CD14-positive monocyte (primary cell): ENCODE measurements at regions of chr10 and their contacts with region 1.

Region 1: GRCh38 chr10:77641788-77642397 is 4.3 kb upstream of the KCNMA1 start:
- DNase-seq: peak; percentile 31 to 57 (median 56)
- H3K4me3 ChIP-seq: no peak overlapping the region
- H3K4me3 Mint-ChIP-seq: peak overlapping the region in 1 of 2 donors; percentile 64
- H3K27ac ChIP-seq: no peak overlapping the region
- H3K27ac Mint-ChIP-seq: no peak overlapping the region
- H3K4me1 ChIP-seq: peaks cover 9 to 14% of the 10 kb centered on the region in 2 donors
- H3K4me1 Mint-ChIP-seq: peaks cover 14% of the 10 kb centered on the region
- H3K27me3 ChIP-seq: peaks cover 32 to 36% of the 10 kb centered on the region in 2 donors
- H3K27me3 Mint-ChIP-seq: peaks cover 42 to 49% (median 43%) of the 10 kb centered on the region in 3 donors
- CTCF ChIP-seq: peak; percentile 90

Region 2: DNA sequence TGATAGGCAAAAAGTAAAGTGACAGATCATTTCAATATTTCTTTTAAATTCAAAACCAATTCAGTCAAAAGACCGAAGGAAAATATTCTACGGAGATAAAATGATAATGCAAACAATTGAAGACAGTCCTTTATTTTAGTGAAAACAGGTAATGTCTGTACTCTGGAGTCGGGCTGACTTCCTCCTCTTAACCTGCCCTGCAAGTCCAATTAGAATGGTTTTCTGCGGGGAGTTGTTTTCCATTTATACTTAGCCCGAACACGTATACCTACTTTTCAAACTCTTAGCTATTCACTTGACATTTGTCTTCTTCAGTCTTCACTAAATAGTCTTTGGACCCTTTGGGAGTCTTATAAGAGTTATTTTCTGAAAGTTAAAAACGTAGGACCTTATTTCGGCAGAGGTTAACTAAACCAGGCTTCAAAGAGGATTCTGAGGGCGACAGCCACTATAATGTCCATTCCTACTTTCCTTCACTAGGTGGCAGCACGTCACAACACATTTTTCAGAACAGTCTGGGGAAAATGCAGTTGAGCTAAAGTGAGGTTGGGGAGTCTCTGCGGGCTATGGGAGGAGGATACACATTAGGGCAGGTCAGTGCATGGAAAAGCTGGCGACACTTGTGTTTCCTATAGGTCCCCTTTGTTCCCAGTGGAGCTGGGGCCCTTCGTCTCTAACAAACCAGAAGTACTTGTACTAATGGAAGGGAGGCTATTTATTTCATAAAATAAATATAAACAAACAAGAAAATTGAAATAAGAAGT is 476.3 kb before region 1 on chr10:
- intact Hi-C with region 1: loop called in 1 of 2 experiments (anchors 5 kb)
- DNase-seq: peak; percentile 22 to 50 (median 35)
- H3K4me3 ChIP-seq: no peak overlapping the region
- H3K4me3 Mint-ChIP-seq: peak overlapping the region in 1 of 2 donors; percentile 40
- H3K27ac ChIP-seq: no peak overlapping the region
- H3K27ac Mint-ChIP-seq: no peak overlapping the region
- H3K4me1 ChIP-seq: no peaks in the 10 kb centered on the region
- H3K4me1 Mint-ChIP-seq: peaks cover 9% of the 10 kb centered on the region
- H3K27me3 ChIP-seq: peaks cover 9 to 16% of the 10 kb centered on the region in 2 donors
- H3K27me3 Mint-ChIP-seq: peaks cover 13 to 41% (median 19%) of the 10 kb centered on the region in 3 donors
- CTCF ChIP-seq: peak; percentile 84

Region 3: DNA sequence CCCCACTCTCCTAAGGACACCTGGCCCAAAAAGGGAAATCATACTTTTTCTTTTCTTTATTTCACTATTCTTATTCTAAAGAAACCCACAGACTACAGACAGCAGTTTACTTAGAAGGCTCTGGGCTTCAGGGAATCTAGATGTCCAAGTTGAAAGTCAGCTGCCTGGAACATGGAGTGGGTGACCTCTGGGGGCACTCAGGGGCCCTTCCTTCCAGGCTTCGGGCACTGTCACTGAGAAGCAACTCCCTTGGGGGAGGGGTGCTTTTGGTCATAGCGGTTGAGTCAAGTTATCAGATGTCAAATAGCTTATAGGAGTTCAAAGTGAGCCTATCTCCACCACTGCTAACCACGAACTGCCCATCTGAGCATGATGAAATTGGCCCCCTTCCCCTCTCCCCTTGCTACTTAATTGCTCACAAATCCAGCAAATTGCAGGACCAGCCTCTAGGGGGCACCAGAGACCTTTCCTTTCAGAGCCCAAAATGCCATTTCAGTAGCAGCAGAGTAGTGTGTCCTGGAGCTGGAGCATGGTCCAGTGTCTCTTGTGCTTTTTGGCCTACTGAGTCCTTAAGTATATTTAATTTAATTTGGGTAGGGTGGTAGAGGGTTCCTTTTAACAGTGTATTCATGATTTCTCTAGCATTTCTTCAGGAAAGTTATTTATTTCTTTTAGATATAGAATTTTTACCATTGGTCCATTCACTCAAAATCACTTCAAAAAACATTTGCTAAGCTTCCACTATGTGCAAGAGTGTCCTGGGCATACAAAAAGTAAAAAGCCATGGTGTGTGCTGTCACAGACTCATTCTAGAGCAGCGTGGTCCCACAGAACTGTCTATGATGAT is 468.1 kb before region 1 on chr10:
- intact Hi-C with region 1: loop called (anchors 1 to 5 kb)
- DNase-seq: peak; percentile 56 to 72 (median 70)
- H3K4me3 ChIP-seq: no peak overlapping the region
- H3K4me3 Mint-ChIP-seq: no peak overlapping the region
- H3K27ac ChIP-seq: no peak overlapping the region
- H3K27ac Mint-ChIP-seq: no peak overlapping the region
- H3K4me1 ChIP-seq: no peaks in the 10 kb centered on the region
- H3K4me1 Mint-ChIP-seq: peaks cover 4% of the 10 kb centered on the region
- H3K27me3 ChIP-seq: no peaks in the 10 kb centered on the region
- H3K27me3 Mint-ChIP-seq: peaks cover 4% of the 10 kb centered on the region in 3 donors
- CTCF ChIP-seq: peak; percentile 96

Region 4: GRCh38 chr10:77391605-77392235 is 250.2 kb before region 1 on chr10:
- intact Hi-C with region 1: loop called (anchors 2 to 5 kb)
- DNase-seq: peak; percentile 3 to 41 (median 6)
- H3K4me3 ChIP-seq: no peak overlapping the region
- H3K4me3 Mint-ChIP-seq: no peak overlapping the region
- H3K27ac ChIP-seq: no peak overlapping the region
- H3K27ac Mint-ChIP-seq: no peak overlapping the region
- H3K4me1 ChIP-seq: no peaks in the 10 kb centered on the region
- H3K4me1 Mint-ChIP-seq: no peaks in the 10 kb centered on the region
- H3K27me3 ChIP-seq: peaks cover 5 to 17% of the 10 kb centered on the region in 2 donors
- H3K27me3 Mint-ChIP-seq: peaks cover 7 to 26% (median 24%) of the 10 kb centered on the region in 3 donors
- CTCF ChIP-seq: peak; percentile 53

Region 5: GRCh38 chr10:77544617-77545016 is 97.3 kb before region 1 on chr10:
- intact Hi-C with region 1: no loop called
- DNase-seq: no peak
- H3K4me3 ChIP-seq: no peak overlapping the region
- H3K4me3 Mint-ChIP-seq: no peak overlapping the region
- H3K27ac ChIP-seq: no peak overlapping the region
- H3K27ac Mint-ChIP-seq: no peak overlapping the region
- H3K4me1 ChIP-seq: peaks cover 0 to 27% of the 10 kb centered on the region in 2 donors
- H3K4me1 Mint-ChIP-seq: peaks cover 34% of the 10 kb centered on the region
- H3K27me3 ChIP-seq: no peaks in the 10 kb centered on the region
- H3K27me3 Mint-ChIP-seq: peaks cover 6 to 14% (median 9%) of the 10 kb centered on the region in 3 donors
- CTCF ChIP-seq: no peak

Region 6: DNA sequence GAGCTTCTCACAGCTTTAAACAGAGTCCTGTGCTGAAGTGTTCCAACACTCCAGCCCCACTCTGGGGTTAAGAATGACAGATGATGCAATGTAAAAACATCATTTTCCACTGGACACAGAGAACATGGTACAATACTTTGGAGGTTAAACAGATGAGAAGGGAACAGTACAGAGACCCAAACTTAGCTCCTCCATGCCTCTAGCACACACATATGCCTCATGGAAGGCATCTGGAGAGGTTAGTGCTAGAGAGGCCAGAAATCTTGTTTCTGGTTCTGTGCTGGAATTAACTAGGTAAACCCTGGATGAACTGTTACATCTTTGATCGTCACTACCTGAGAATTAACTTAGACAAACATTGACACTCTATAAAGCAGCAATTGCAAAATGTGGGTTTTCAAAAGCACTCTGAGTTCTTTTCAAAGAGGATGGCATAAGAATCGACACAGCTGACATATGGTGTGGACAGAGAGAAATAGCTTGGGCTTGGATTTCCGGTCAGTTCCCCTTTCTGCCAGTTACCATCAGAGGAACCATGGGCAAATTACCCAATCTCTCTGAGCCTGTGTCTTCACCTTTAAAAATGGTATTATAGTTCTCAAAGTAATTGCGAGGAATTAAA is 86.2 kb before region 1 on chr10:
- intact Hi-C with region 1: no loop called
- DNase-seq: peak in 2 of 3 donors; percentile 34 to 80
- H3K4me3 ChIP-seq: no peak overlapping the region
- H3K4me3 Mint-ChIP-seq: no peak overlapping the region
- H3K27ac ChIP-seq: peak overlapping the region in 1 of 2 donors; percentile 90
- H3K27ac Mint-ChIP-seq: peak overlapping the region; percentile 63 to 93 (median 88)
- H3K4me1 ChIP-seq: peaks cover 6 to 58% of the 10 kb centered on the region in 2 donors
- H3K4me1 Mint-ChIP-seq: peaks cover 54% of the 10 kb centered on the region
- H3K27me3 ChIP-seq: no peaks in the 10 kb centered on the region
- H3K27me3 Mint-ChIP-seq: peaks cover 0 to 9% (median 9%) of the 10 kb centered on the region in 3 donors
- CTCF ChIP-seq: no peak

Region 7: GRCh38 chr10:77622889-77623291 is 19.0 kb before region 1 on chr10:
- intact Hi-C with region 1: no loop called
- DNase-seq: peak; percentile 45 to 60 (median 60)
- H3K4me3 ChIP-seq: peak overlapping the region; percentile 10 to 68 (median 43)
- H3K4me3 Mint-ChIP-seq: peak overlapping the region; percentile 53 to 89
- H3K27ac ChIP-seq: peak overlapping the region; percentile 64 to 82
- H3K27ac Mint-ChIP-seq: peak overlapping the region; percentile 86 to 92 (median 89)
- H3K4me1 ChIP-seq: peaks cover 69 to 71% of the 10 kb centered on the region in 2 donors
- H3K4me1 Mint-ChIP-seq: peaks cover 78% of the 10 kb centered on the region
- H3K27me3 ChIP-seq: no peaks in the 10 kb centered on the region
- H3K27me3 Mint-ChIP-seq: peaks cover 0 to 1% (median 0%) of the 10 kb centered on the region in 3 donors
- CTCF ChIP-seq: no peak